Transverse colon (tissue), 4 donors: ENCODE measurements at regions of chr1 and their contacts with region 1.

Region 1: DNA sequence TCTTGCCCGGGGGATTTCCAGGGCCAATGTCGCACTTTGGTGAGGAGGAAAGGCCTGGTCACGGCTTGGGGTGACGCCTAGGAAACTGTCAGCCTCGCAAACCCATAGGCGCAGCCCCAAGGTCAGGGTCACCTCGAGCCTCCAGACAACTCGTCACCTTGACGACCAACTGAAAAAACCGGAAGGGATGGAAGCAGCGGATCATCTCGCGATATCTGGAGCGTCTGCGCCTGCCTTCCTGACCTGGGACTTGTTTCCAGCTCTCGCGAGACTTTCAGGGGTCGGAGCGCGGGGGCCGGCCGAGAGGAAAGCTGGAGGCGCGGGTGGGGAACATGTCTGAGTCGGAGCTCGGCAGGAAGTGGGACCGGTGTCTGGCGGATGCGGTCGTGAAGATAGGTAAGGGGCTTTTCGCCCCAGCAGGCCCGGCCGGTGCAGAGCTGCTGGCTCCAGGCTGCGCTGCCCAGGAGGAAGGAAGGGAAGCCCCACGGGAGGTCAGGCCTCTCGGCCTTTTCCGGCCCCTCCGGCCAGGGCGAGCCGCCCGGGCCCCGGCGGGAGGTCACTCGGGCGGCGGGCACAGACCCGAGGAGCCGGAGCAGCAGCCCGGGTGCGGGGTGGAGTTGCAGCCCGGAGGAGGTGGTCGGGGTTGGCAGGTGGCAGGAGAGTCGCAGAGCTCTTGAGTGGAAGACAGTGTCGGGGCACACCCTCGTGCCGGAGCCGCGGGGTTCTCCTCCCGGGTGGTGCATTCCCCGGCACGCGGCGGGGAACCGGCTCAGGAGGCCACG is 47.2 kb upstream of the NBL1 start:
- DNase-seq: peak; percentile 98
- H3K4me3 ChIP-seq: peak overlapping the region; percentile 77 to 96 (median 86)
- H3K27ac ChIP-seq: peak overlapping the region; percentile 97 to 99 (median 98)
- H3K4me1 ChIP-seq: peaks cover 23 to 64% (median 40%) of the 10 kb centered on the region in 4 donors
- H3K27me3 ChIP-seq: no peaks in the 10 kb centered on the region
- CTCF ChIP-seq: no peak
- EP300 ChIP-seq: no peak
- POLR2A ChIP-seq: peak; percentile 95

Region 2: DNA sequence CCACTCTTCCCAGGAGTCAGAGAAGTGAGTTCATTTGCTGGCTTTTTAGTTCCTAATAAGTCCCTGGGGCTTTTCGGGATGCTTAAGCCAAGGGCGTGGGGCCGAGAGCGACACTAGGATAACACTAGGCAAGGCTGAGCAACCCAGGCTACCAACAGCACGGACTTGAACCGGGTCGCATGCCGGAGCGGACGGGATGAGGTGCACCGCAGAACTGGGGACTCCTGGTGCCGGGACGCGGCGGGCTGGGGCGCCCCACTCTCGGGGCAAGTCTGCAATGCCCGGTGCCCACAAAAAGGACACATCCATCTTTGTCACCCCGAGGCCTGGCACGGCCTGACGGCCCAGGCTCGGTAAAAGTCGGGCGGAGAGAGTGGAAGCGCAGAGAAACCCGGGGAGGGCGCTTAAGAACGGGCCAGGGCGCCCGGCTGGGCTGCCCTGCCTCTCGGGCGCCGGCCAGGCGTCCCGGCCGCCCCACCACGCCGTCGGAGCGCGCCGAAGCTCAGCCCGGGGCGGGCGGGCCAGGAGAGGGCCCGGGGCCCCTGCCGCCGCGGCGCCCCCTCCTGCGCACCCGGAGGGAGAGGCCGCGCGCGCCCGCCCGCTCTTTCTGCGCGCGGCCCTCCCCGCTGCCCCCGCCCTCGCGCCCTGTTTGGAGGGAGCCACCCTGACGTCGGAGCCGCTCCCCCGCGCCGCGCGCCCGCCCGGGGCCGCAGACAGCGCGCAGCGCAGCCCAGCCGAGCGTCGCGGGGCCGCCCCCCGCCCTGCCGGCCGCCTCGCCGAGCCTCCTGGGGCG is 46.9 kb after region 1 on chr1 and contains the start of gene NBL1:
- in situ Hi-C with region 1: no loop called
- intact Hi-C with region 1: loop called (anchors 5 kb)
- DNase-seq: peak; percentile 84
- H3K4me3 ChIP-seq: peak within 1 kb of the TSS; percentile 60 to 91 (median 77)
- H3K27ac ChIP-seq: peak within 1 kb of the TSS; percentile 95 to 98 (median 96)
- H3K4me1 ChIP-seq: peaks cover 24 to 67% (median 64%) of the 10 kb centered on the region in 4 donors
- H3K27me3 ChIP-seq: no peaks in the 10 kb centered on the region
- CTCF ChIP-seq: no peak
- EP300 ChIP-seq: no peak
- POLR2A ChIP-seq: peak; percentile 25
- total RNA-seq, gene NBL1: 122 to 238 (median 204) TPM